MCF 10A (cell line): ENCODE measurements at regions of chr6 and their contacts with region 1.

Region 1: DNA sequence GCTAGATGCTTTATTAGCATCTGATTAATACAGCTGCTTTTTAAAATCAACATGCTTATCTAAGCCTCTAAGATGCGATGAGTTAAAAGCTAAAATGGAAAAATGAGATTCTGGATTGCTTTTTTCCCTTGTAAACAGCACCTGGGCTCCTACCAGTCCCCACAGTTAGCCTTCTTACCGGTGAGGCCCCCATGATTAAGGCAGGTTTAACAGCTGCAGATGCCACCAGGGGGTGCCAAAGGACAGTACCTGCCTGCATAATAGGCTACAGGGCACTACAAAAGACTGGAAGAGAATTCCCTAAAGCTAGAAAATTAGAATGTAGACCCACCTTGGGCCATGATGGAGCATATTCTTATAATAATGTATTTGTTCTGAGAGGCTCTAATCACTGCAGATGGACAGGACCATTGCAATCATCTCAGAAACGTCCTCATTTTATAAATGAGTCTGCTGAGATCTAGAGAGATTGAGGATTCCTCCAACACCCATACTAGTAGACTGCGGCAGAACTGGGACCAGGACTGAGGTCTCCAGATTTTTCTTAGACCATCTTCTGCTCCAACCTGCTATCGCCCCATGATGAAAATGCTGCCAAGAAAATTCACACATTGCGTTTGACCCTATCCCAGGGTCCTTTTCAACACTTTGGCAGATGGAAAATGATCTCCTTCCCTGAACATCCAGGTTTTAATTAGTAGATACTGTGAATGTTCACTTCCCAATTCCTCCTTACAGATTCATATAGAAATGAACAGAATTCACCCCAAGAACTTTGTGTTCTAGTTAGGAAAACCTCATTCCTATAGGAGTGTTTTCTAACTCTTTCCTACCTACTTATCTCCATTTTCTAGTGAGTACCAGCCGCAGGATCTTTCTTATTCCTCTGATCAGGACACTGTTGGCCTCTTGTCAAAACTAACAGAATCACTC is 148.8 kb downstream of the RPS12 start:
- DNase-seq: peak; percentile 71
- H3K4me3 Mint-ChIP-seq: no peak overlapping the region
- H3K27ac Mint-ChIP-seq: no peak overlapping the region
- H3K4me1 Mint-ChIP-seq: peaks cover 10% of the 10 kb centered on the region
- H3K27me3 Mint-ChIP-seq: peaks cover 68% of the 10 kb centered on the region
- CTCF ChIP-seq: peak; percentile 81

Region 2: GRCh38 chr6:132830334-132830751 is 132.9 kb before region 1 on chr6:
- CTCF ChIA-PET with region 1: interaction called, 17 read pairs
- POLR2A ChIA-PET with region 1: no interaction called
- intact Hi-C with region 1: loop called (anchors 1 kb)
- DNase-seq: peak; percentile 45
- H3K4me3 Mint-ChIP-seq: no peak overlapping the region
- H3K27ac Mint-ChIP-seq: no peak overlapping the region
- H3K4me1 Mint-ChIP-seq: no peaks in the 10 kb centered on the region
- H3K27me3 Mint-ChIP-seq: peaks cover 19% of the 10 kb centered on the region
- CTCF ChIP-seq: peak; percentile 41

Region 3: DNA sequence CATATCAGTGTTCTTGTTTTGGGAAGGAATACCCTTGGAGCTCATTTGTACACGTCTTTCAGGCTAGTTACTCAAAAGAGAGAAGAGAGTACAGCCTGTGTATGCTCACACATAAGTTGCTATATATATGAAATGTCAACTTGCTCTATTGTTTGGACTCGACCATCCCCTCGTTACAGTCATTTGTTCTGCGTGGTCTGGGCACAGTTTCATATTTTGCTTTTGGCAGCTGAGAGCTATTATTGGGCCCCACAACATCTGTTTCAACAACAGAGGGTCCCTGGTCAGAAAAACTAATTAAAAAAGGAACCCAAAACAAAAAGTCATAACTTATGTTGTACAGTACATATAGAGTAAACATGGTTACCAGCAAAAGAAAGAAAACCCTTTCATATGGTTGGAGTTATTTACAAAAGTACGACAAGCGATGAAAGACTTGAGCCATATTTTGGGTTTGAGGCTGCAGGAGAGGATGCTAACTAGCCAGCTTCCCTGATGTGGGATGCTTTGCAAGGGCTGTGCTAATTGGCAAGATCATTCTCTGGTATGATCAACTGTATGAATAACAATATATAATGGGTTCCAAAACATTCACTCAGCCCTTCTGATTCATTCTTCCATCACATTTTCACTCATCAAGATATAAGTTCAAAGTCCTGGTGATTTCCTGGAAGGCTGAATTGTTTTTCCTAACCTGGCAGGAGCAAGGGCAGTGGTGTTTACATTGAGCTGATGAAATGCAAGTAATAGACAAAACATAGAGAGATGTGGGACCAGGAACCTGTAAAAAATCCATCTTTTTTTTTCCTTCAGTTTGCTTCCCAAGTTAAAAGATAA is 11.0 kb before region 1 on chr6:
- CTCF ChIA-PET with region 1: interaction called, 16 read pairs
- POLR2A ChIA-PET with region 1: no interaction called
- intact Hi-C with region 1: no loop called
- DNase-seq: no peak
- H3K4me3 Mint-ChIP-seq: no peak overlapping the region
- H3K27ac Mint-ChIP-seq: no peak overlapping the region
- H3K4me1 Mint-ChIP-seq: no peaks in the 10 kb centered on the region
- H3K27me3 Mint-ChIP-seq: peaks cover 100% of the 10 kb centered on the region
- CTCF ChIP-seq: no peak

Region 4: DNA sequence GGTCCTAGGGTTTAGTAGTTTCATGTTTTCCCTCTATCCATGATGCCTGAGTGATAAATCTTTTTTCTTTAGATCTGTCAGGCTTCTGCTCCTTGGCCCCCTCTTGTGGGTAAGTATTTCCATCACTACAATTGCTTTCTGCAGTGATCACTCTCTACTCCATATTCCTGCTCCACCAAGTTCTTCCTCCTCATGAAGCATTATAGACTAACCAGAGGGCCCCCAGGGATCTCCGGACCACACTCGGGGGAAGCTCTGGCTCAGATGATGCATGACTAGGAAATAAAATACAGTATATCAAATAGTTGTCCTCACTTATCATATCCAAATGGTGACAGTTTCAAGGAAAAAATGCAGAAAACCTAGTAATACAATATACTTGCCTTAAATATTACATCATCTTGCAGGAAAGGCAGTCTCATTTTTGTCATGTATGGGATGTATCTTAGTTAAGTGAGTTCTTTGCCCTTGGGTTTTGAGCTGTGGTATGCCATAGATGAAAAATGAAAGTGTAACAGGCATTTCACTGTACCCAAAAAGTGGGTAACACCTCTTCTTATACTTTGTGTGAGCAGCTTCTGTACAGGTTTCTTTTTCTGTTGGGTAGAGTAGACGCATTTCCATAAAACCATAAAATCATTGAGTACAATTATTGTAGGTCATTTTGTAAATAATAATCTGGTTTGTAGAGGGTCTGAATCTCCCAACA is 77.0 kb after region 1 on chr6:
- CTCF ChIA-PET with region 1: interaction called, 6 read pairs
- POLR2A ChIA-PET with region 1: no interaction called
- intact Hi-C with region 1: loop called (anchors 1 kb)
- DNase-seq: peak; percentile 27
- H3K4me3 Mint-ChIP-seq: no peak overlapping the region
- H3K27ac Mint-ChIP-seq: no peak overlapping the region
- H3K4me1 Mint-ChIP-seq: no peaks in the 10 kb centered on the region
- H3K27me3 Mint-ChIP-seq: peaks cover 60% of the 10 kb centered on the region
- CTCF ChIP-seq: peak; percentile 58

Region 5: GRCh38 chr6:133184798-133185372 is 221.7 kb after region 1 on chr6:
- CTCF ChIA-PET with region 1: interaction called, 6 read pairs
- POLR2A ChIA-PET with region 1: no interaction called
- intact Hi-C with region 1: loop called (anchors 10 kb)
- DNase-seq: peak; percentile 22
- H3K4me3 Mint-ChIP-seq: no peak overlapping the region
- H3K27ac Mint-ChIP-seq: no peak overlapping the region
- H3K4me1 Mint-ChIP-seq: no peaks in the 10 kb centered on the region
- H3K27me3 Mint-ChIP-seq: peaks cover 73% of the 10 kb centered on the region
- CTCF ChIP-seq: peak; percentile 55

Region 6: DNA sequence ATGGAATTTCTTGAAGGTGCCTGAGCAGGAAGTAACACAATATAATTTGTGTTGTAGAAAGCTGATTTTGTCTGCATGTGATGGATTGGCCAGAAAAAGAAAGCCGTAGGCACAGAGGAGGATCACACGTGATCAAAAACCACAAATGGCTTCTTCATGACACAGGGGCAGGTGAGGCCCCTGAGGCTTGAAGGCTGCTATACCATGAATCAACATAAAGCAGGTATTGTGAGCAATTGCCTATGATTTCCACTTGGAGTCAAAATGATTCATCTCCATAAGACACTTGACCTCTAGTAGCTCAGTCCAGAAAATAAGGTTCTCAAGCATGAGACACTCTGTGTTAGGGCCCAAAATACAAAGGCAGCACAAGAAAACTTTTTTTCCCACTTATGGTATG is 235.5 kb after region 1 on chr6:
- CTCF ChIA-PET with region 1: no interaction called
- POLR2A ChIA-PET with region 1: no interaction called
- intact Hi-C with region 1: no loop called
- DNase-seq: peak; percentile 5
- H3K4me3 Mint-ChIP-seq: no peak overlapping the region
- H3K27ac Mint-ChIP-seq: no peak overlapping the region
- H3K4me1 Mint-ChIP-seq: no peaks in the 10 kb centered on the region
- H3K27me3 Mint-ChIP-seq: peaks cover 100% of the 10 kb centered on the region
- CTCF ChIP-seq: no peak

Region 7: DNA sequence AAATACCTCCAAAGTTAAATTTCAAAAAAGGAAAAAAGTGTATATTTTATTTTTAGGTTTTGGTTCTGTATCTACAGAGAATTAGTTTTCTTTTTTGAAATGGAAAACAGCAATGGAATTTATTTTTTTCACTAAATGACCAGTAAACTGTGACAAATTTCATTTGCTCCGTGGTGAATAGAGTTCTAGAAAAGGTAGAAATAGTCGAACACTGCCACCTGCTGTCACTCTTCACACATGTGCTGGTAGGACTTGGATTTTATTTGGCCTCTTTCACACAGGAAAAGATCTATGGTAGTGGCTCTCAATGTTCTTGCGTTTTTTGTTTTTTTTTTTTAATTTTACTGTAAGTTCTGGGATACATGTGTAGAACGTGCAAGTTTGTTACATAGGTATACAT is 590.5 kb after region 1 on chr6:
- CTCF ChIA-PET with region 1: interaction called, 14 read pairs
- POLR2A ChIA-PET with region 1: no interaction called
- intact Hi-C with region 1: loop called (anchors 1 kb)
- DNase-seq: peak; percentile 70
- H3K4me3 Mint-ChIP-seq: no peak overlapping the region
- H3K27ac Mint-ChIP-seq: no peak overlapping the region
- H3K4me1 Mint-ChIP-seq: peaks cover 12% of the 10 kb centered on the region
- H3K27me3 Mint-ChIP-seq: no peaks in the 10 kb centered on the region
- CTCF ChIP-seq: peak; percentile 61